ENCODE measurements at regions of chr16 and their contacts with region 1.

Region 1: GRCh38 chr16:46607529-46607928 is 13.7 kb downstream of the SHCBP1 start:
- H3K4me3 Mint-ChIP-seq: no peak overlapping the region
- H3K27ac Mint-ChIP-seq: no peak overlapping the region
- H3K4me1 Mint-ChIP-seq: no peaks in the 10 kb centered on the region
- H3K27me3 Mint-ChIP-seq: no peaks in the 10 kb centered on the region

Region 2: DNA sequence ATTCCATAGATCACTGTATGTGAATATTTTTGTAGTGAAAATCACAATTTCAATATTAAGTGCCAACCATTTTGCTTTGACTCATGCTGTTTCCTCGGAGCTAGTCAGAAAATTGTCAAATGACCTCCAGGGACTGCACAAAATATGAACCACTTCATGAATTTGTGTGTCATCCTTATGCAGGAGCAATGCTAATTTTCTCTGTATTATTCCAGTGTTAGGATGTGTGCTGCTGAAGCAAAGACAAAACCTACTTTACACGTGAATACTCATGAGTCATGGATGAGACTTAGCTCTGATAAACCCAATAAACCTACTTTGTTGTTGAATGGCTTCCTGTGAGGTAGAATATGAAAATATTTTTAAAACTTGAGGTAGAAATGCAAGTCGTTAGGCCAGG is 51.6 kb before region 1 on chr16:
- intact Hi-C with region 1: loop called (anchors 1 kb)
- H3K4me3 Mint-ChIP-seq: no peak overlapping the region
- H3K27ac Mint-ChIP-seq: no peak overlapping the region
- H3K4me1 Mint-ChIP-seq: peaks cover 4% of the 10 kb centered on the region
- H3K27me3 Mint-ChIP-seq: peaks cover 19% of the 10 kb centered on the region

Measured in dendritic cell treated with granulocyte-macrophage colony-stimulating factor and Interleukin-4, amounts not matched to agents 40 ng/mL and 50 ng/mL, for 4 days (primary cell).